AG04450 (cell line): ENCODE measurements at regions of chr11 and their contacts with region 1.

Region 1: GRCh38 chr11:14249121-14249963 is 109.6 kb downstream of the RRAS2 start:
- DNase-seq: peak; percentile 15
- H3K4me3 ChIP-seq: no peak overlapping the region
- H3K27ac ChIP-seq: no peak overlapping the region
- H3K27me3 ChIP-seq: peaks cover 44% of the 10 kb centered on the region
- CTCF ChIP-seq: peak; percentile 87

Region 2: DNA sequence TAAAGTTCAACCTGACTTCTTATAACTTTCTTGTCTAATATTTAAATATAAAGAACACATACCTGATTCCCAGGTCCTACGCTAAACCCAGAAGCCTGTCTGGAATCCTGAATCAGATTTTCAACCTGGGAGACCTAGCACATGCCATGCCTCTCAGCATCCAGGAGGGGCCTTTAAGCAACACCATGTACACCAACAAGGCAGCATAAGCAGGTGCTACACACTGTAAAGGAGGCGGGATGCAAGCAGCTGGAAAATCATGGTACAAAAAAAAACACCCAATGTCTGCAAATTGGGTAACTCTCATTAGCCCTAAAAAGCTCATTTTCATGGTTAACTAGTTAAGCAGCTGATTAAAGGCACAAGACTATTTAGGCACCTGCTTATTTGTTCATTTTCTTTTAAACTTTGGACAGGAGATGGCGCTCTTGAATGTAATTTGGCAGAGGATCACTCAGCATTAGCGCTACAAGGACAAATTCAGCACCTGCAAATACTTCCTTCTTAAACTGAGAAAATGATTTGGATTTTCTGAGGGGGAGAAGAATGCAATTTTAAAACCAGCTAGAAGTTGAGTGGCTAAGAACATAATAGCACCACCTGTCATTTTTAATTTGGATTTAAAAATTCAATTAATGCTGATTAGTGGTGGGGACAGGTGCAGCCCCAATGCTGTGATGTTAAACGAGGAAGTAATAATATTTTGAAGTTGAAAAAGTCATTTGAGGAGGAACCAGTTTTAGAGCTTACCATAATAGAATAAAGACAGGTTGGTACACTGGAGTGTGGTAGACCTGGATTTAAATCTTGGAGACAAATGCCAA is 476.9 kb before region 1 on chr11:
- CTCF ChIA-PET with region 1: interaction called, 11 read pairs
- POLR2A ChIA-PET with region 1: no interaction called
- DNase-seq: peak; percentile 10
- H3K4me3 ChIP-seq: no peak overlapping the region
- H3K27ac ChIP-seq: no peak overlapping the region
- H3K27me3 ChIP-seq: peaks cover 4% of the 10 kb centered on the region
- CTCF ChIP-seq: peak; percentile 46